A549 (cell line): ENCODE measurements at regions of chr7 and their contacts with region 1.

Region 1: GRCh38 chr7:23055582-23056178 is 41.8 kb upstream of the HYCC1 start:
- DNase-seq: peak; percentile 38 to 73
- ATAC-seq: peak; percentile 90 to 98
- H3K4me3 ChIP-seq: no peak overlapping the region
- H3K27ac ChIP-seq: no peak overlapping the region
- H3K4me1 ChIP-seq: no peaks in the 10 kb centered on the region
- CTCF ChIP-seq: peak; percentile 94
- EP300 ChIP-seq: no peak
- POLR2A ChIP-seq: no peak
- RAD21 ChIP-seq: peak; percentile 92 to 95

Region 2: DNA sequence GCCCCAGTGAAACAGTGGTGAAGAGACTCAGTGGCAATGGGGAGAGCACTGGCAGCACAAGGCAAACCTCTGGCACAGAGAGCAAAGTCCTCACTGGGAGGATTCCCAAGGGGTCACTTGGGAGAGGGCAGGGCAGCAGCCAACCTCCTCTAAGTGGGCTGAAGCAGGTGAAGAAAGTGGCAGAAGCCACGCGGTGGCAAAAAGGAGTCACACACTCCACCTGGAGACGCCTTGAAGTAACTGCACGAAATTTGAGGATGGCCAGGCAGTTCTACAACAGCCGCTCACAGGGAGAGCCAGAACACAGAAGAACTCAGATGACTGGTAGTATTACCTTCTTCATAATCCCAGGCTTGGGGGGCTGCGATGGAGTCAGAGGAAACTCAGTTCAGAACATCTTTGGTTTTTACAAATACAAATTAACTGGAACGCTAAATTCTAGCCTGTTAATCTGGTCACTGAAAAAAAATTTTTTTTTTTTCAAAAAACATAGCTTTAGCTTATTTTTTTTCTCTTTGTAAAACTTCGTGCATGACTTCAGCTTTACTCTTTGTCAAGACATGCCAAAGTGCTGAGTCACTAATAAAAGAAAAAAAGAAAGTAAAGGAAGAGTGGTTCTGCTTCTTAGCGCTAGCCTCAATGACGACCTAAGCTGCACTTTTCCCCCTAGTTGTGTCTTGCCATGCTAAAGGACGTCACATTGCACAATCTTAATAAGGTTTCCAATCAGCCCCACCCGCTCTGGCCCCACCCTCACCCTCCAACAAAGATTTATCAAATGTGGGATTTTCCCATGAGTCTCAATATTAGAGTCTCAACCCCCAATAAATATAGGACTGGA is 329.1 kb before region 1 on chr7:
- CTCF ChIA-PET with region 1: interaction called, 53 read pairs
- POLR2A ChIA-PET with region 1: no interaction called
- DNase-seq: peak; percentile 76
- ATAC-seq: peak; percentile 88 to 92
- H3K4me3 ChIP-seq: 0 out of 3 replicates have a peak overlapping the region, but pooled peaks have one; percentile 17
- H3K27ac ChIP-seq: peak overlapping the region; percentile 48 to 84
- H3K4me1 ChIP-seq: peaks cover 28% of the 10 kb centered on the region
- CTCF ChIP-seq: peak; percentile 65
- EP300 ChIP-seq: peak in 1 of 2 experiments; percentile 28; a peak in 1 of 5 replicates
- POLR2A ChIP-seq: no peak
- RAD21 ChIP-seq: peak; percentile 82 to 86

Region 3: DNA sequence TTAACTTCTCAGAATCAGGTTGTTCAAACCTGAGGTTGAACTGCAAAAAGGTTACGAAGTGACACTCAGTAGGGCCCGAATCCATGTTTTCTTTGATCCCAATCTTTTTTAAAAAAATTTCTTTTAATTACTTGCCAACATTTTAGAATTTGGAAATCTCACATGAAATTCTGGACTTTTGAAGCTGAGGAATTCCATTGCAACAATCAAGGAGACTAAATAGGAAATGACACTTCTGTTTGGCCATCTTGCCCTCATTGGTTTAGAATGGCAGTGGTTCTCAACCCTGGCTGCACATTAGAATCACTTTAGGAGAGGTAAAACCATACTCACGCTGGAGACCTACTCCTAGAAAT is 232.6 kb before region 1 on chr7:
- CTCF ChIA-PET with region 1: interaction called, 10 read pairs
- POLR2A ChIA-PET with region 1: no interaction called
- DNase-seq: no peak
- ATAC-seq: peak; percentile 8 to 9; a peak in 2 of 6 replicates
- H3K4me3 ChIP-seq: peak overlapping the region; percentile 83
- H3K27ac ChIP-seq: peak overlapping the region; percentile 92 to 94
- H3K4me1 ChIP-seq: peaks cover 22% of the 10 kb centered on the region; the same call in 2 of the 3 replicates
- CTCF ChIP-seq: no peak
- EP300 ChIP-seq: no peak
- POLR2A ChIP-seq: no peak
- RAD21 ChIP-seq: no peak

Region 4: GRCh38 chr7:22867003-22867402 is 188.7 kb before region 1 on chr7:
- CTCF ChIA-PET with region 1: interaction called, 20 read pairs
- POLR2A ChIA-PET with region 1: interaction called, 5 read pairs
- DNase-seq: no peak
- ATAC-seq: no peak
- H3K4me3 ChIP-seq: no peak overlapping the region
- H3K27ac ChIP-seq: no peak overlapping the region
- H3K4me1 ChIP-seq: 0 out of 3 replicates have a peak, but pooled peaks cover 3% of the 10 kb centered on the region
- CTCF ChIP-seq: no peak
- EP300 ChIP-seq: no peak
- POLR2A ChIP-seq: no peak
- RAD21 ChIP-seq: no peak

Region 5: DNA sequence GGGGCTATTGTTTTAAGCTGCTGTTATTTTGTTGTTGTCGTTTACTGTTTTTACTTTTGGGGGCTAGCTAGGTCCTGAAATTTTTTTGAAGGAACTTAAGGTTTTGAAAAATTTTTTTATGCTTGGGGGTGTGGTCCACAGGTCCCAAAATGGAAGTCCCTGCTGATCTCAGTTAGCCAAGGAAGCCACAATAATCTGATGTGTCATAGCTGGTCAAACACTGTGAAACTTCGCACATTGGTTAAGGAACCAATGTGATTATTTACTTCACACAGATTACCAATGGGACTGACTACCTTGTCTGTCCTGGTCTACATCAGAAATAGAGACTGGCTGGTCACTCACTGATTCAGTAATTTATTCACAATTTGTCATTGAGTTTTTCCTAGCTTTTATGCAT is 12.2 kb before region 1 on chr7:
- CTCF ChIA-PET with region 1: interaction called, 29 read pairs
- POLR2A ChIA-PET with region 1: no interaction called
- DNase-seq: peak in 1 of 2 experiments; percentile 29
- ATAC-seq: peak in 1 of 2 experiments; percentile 39; a peak in 1 of 6 replicates
- H3K4me3 ChIP-seq: no peak overlapping the region
- H3K27ac ChIP-seq: no peak overlapping the region
- H3K4me1 ChIP-seq: no peaks in the 10 kb centered on the region
- CTCF ChIP-seq: no peak
- EP300 ChIP-seq: no peak
- POLR2A ChIP-seq: no peak
- RAD21 ChIP-seq: no peak

Region 6: DNA sequence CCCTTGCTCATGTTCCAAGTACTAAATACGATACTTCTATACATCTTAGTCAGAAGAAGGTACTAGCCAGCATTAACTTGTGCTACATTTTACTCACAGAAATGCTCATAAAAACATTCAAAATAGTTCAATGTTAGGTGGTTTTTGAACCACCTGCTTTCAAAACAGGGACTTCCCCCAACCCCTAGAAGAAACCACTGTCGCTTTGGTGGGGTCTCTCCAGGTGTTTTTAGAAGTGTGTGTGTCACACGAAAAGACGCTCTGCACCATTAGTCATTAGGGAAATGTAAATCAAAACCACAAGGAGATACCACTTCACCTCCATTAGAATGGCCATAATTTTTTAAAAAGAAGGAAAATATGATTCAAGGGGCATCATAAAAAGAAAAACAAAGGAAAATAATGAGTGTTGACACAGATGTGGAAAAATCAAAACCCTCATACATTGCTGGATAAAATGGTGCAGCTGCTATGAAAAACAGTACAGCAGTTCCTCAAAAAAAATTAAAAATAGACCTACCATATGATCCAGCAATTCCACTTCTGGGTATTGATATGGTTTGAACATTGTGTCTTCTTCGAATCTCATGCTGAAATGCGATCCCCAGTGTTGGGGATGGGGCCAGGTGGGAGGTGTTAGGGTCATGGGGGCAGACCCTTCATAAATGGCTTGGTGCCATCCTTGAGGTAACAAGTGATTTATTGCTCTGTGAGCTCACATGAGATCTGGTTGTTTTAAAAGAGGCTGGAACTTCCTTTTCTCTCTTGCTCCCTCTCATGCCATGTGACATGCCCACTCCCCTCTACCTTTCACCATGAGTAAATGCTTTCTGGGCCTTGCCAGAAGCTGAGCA is 317.7 kb after region 1 on chr7:
- CTCF ChIA-PET with region 1: no interaction called
- POLR2A ChIA-PET with region 1: no interaction called
- DNase-seq: no peak
- ATAC-seq: no peak
- H3K4me3 ChIP-seq: no peak overlapping the region
- H3K27ac ChIP-seq: no peak overlapping the region
- H3K4me1 ChIP-seq: peaks cover 18% of the 10 kb centered on the region
- CTCF ChIP-seq: no peak
- EP300 ChIP-seq: no peak
- POLR2A ChIP-seq: no peak
- RAD21 ChIP-seq: no peak